ENCODE measurements at regions of chr19 and their contacts with region 1.

Region 1: DNA sequence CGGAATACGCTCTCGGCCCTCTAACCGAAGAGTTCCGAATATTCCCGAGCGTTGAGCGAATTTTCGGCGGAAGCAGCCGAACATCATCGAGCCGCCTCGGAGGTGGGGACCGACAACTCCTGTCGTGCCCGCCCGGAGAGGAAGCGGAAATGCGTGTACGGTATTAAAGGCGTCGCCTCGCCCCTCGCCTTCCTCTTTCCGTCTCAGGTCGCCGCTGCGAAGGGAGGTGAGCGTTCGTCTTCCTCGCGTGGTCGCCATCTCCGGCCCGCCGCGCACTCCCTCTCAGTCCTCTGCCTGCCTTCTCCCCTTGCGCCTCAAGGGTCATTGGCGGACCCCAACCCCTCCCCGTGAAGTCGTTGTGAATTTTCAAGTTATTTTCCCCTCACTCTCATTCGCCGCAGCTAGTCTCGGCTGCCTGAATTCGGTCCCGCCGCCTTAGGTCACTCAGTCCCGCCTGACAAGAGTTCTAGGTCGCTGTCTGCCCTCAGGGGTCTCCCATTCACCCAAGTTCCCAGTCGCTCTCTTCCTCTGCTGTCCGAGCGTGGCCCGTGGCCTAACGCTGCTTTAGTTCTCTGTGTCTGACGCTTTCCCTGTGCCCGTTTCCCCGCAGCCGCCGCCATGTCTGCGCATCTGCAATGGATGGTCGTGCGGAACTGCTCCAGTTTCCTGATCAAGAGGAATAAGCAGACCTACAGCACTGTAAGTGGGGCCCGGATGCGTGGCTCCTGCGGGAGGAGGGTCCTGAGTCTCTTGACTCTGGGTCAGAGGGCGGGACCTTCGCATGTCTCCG is at the start of gene RPL28:
- DNase-seq: peak; percentile 98 to 99
- ATAC-seq: peak; percentile 96
- H3K4me3 ChIP-seq: peak within 1 kb of the TSS; percentile 66 to 76
- H3K27ac ChIP-seq: peak within 1 kb of the TSS in 1 of 2 donors; percentile 87
- H3K4me1 ChIP-seq: no peaks in the 10 kb centered on the region
- H3K27me3 ChIP-seq: peaks cover 0 to 2% of the 10 kb centered on the region in 2 donors
- total RNA-seq, gene RPL28: 841 to 1,022 TPM

Region 2: GRCh38 chr19:55279770-55280643 is 105.9 kb before region 1 on chr19 and contains the start of gene HSPBP1:
- intact Hi-C with region 1: loop called in 1 of 2 experiments (anchors 2 kb)
- DNase-seq: peak; percentile 94 to 96
- ATAC-seq: peak; percentile 93
- H3K4me3 ChIP-seq: peak within 1 kb of the TSS; percentile 5 to 53
- H3K27ac ChIP-seq: peak within 1 kb of the TSS in 1 of 2 donors; percentile 30
- H3K4me1 ChIP-seq: no peaks in the 10 kb centered on the region
- H3K27me3 ChIP-seq: no peaks in the 10 kb centered on the region
- total RNA-seq, gene HSPBP1: 14.1 to 16.3 TPM

Region 3: GRCh38 chr19:55301459-55302317 is 84.2 kb before region 1 on chr19:
- intact Hi-C with region 1: loop called in 1 of 2 experiments (anchors 2 kb)
- DNase-seq: peak; percentile 91 to 97
- ATAC-seq: peak; percentile 94
- H3K4me3 ChIP-seq: no peak overlapping the region
- H3K27ac ChIP-seq: no peak overlapping the region
- H3K4me1 ChIP-seq: no peaks in the 10 kb centered on the region
- H3K27me3 ChIP-seq: no peaks in the 10 kb centered on the region

Region 4: DNA sequence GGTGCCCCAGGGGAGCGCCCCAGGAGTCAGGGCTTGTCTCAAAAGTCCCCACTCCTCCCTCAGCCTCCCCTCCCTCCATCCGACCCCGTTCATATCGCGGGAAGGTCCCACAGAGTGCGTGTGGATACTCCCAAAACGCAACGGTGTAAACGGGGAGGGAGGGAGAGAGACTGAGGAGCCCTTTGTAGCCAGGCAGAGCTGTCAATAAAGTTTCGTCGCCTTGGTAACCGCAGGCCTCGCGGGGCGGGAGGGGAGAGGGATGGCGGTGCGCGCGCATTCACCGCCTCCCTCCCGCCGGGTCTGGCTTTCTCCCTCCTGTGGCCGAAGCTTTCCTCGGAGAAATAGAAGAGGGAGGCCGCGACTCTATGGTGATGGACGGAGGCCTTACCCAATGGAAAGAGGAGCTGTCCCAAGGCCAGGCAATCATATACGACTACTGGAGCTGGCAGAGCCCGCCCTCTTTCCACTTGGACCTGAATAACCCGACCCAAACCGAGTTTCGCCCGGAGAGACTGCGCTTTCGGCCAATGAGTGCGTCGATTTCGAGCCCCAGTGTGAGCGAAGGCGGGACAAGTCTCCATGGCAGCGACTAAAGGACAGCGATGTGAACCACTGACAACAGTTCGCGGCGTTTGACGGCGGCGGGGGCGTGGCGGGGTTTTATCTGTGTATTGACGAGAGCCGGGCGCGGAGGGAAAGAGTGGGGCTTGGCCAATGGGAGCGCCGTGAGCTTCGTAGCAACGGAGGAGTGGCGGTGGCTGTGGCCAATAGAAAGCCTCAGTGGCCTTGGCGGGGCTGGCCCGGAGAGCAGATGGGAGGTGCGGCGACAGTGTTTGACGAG is 46.7 kb before region 1 on chr19 and contains the start of gene KMT5C:
- intact Hi-C with region 1: loop called (anchors 1 to 5 kb)
- DNase-seq: peak; percentile 100
- ATAC-seq: peak; percentile 97
- H3K4me3 ChIP-seq: peak within 1 kb of the TSS; percentile 48 to 56
- H3K27ac ChIP-seq: peak within 1 kb of the TSS in 1 of 2 donors; percentile 39
- H3K4me1 ChIP-seq: no peaks in the 10 kb centered on the region
- H3K27me3 ChIP-seq: no peaks in the 10 kb centered on the region
- total RNA-seq, gene KMT5C: 4.5 to 12.8 TPM

Region 5: DNA sequence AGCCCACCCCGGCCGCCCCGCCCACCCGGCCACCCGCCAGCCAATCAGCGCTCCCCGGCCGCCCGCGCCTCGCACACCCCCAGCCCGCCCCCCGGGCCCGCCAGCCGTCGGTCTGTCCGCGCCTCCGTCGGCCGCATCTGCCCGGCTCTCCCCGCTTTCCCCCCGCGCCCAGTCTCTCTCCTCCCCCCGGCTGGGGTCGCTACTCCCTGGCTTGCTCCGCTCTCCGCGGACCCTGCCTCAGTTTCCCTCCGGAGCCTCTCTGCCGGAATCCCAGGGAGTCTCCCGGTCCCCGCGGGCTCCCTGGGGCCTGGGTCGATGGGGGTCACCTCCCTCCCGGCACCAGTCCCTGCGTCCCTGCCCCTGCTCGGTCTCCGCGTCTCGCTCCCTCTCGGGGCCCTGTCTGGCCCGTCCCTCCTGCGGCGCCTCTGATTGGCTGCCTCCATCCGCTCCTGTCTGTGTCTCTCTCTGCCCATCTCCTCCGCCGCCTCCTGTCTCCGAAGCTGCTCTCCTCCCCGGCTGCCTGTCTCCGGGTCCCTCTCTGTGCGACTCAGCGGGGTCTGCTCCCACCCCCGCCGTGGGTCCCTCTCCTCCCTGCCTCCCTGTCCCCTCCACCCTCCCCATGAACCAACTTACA is 16.1 kb before region 1 on chr19:
- intact Hi-C with region 1: no loop called
- DNase-seq: peak in 1 of 2 donors; percentile 47
- ATAC-seq: no peak
- H3K4me3 ChIP-seq: no peak overlapping the region
- H3K27ac ChIP-seq: no peak overlapping the region
- H3K4me1 ChIP-seq: no peaks in the 10 kb centered on the region
- H3K27me3 ChIP-seq: no peaks in the 10 kb centered on the region

Region 6: DNA sequence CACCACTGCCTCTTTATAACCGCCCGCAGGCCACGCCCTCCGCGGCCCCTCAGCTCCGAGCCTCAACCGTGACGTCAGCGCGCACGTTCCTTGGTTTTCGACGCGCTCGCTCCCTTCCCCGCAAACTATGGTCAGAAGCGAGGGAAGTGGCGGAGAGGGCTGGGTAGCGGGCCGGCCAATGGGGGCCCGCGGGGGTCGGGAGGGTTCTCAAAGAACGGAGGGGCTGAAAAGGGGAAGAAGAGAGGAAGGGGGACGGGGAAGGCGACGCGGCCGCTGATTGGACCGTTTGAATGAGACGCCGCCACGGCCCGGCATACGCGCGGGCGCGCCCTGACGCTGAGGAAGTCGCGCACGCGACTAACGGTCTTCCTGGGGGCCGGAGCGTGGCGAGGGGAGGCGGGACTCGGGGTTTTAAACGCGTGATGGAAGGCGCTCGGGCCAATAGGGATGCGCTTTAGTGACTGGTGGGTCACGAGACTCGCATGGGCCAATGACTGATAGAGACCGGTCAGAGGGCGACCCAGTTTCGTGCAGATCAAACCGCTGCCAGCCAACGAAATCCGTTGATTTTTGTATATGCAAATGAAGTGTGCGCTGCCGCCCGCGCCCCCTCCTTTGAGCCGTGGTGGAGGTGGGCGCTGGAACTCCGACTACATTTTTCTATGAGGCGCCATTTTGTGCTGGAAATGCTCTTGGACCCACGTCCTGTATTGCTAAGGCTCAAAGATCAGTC is 22.0 kb after region 1 on chr19:
- intact Hi-C with region 1: loop called in 1 of 2 experiments (anchors 1 kb)
- DNase-seq: peak; percentile 99
- ATAC-seq: peak; percentile 97
- H3K4me3 ChIP-seq: peak overlapping the region; percentile 20 to 58
- H3K27ac ChIP-seq: peak overlapping the region in 1 of 2 donors; percentile 81
- H3K4me1 ChIP-seq: peaks cover 0 to 2% of the 10 kb centered on the region in 2 donors
- H3K27me3 ChIP-seq: no peaks in the 10 kb centered on the region

Region 7: DNA sequence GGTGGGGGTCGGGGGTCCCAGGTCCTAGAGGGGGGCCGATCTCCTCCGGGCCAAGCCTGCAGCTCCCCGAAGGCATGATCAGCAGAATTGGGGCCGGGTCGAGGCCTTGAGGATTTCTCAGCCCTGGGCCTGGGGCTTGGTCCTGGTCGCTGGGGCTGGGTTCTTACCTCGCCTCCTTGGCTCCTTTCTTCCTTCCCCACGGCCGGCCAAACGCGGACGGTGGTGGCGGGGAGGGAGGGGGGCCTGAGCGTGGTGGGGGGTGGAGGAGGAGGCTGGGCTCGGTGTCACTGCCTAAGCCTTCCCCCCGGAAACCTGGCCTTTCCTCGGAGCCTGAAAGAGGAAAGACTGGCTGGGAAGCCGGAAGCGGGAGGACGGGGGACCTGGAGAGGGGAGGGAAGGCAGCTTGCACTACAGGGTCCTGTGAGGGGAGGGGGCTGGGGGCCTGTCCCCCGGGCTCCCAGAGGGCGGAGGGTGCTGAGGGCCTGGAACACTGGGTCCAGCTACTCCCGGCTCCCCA is 194.8 kb after region 1 on chr19 and contains the start of gene ZNF579:
- intact Hi-C with region 1: no loop called
- DNase-seq: peak; percentile 92 to 95
- ATAC-seq: peak; percentile 91
- H3K4me3 ChIP-seq: peak within 1 kb of the TSS; percentile 78 to 81
- H3K27ac ChIP-seq: peak within 1 kb of the TSS in 1 of 2 donors; percentile 52
- H3K4me1 ChIP-seq: no peaks in the 10 kb centered on the region
- H3K27me3 ChIP-seq: no peaks in the 10 kb centered on the region
- total RNA-seq, gene ZNF579: 12.9 to 13.1 TPM

Region 8: GRCh38 chr19:55688422-55689246 is 302.7 kb after region 1 on chr19:
- intact Hi-C with region 1: no loop called
- DNase-seq: peak; percentile 33 to 61
- ATAC-seq: no peak
- H3K4me3 ChIP-seq: no peak overlapping the region
- H3K27ac ChIP-seq: no peak overlapping the region
- H3K4me1 ChIP-seq: no peaks in the 10 kb centered on the region
- H3K27me3 ChIP-seq: no peaks in the 10 kb centered on the region

Measured in aorta (tissue), 5 donors.